ENCODE measurements at regions of chr5 and their contacts with region 1.

Region 1: GRCh38 chr5:145681686-145682085 is 153.5 kb downstream of the PRELID2 start:
- DNase-seq: peak in 2 of 5 donors; percentile 12 to 65
- H3K4me3 ChIP-seq: no peak overlapping the region
- H3K27ac ChIP-seq: no peak overlapping the region
- H3K4me1 ChIP-seq: peaks cover 3% of the 10 kb centered on the region
- H3K27me3 ChIP-seq: no peaks in the 10 kb centered on the region
- CTCF ChIP-seq: peak in 1 of 3 donors; percentile 51
- EP300 ChIP-seq: no peak
- POLR2A ChIP-seq: no peak

Region 2: GRCh38 chr5:145283101-145283810 is 398.4 kb before region 1 on chr5:
- intact Hi-C with region 1: no loop called
- DNase-seq: no peak
- H3K4me3 ChIP-seq: no peak overlapping the region
- H3K27ac ChIP-seq: no peak overlapping the region
- H3K4me1 ChIP-seq: no peaks in the 10 kb centered on the region
- H3K27me3 ChIP-seq: no peaks in the 10 kb centered on the region
- CTCF ChIP-seq: no peak
- EP300 ChIP-seq: no peak
- POLR2A ChIP-seq: no peak

Region 3: GRCh38 chr5:145408048-145408341 is 273.7 kb before region 1 on chr5:
- intact Hi-C with region 1: no loop called
- DNase-seq: no peak
- H3K4me3 ChIP-seq: no peak overlapping the region
- H3K27ac ChIP-seq: no peak overlapping the region
- H3K4me1 ChIP-seq: no peaks in the 10 kb centered on the region
- H3K27me3 ChIP-seq: no peaks in the 10 kb centered on the region
- CTCF ChIP-seq: no peak
- EP300 ChIP-seq: no peak
- POLR2A ChIP-seq: no peak

Region 4: GRCh38 chr5:145811834-145812625 is 130.3 kb after region 1 on chr5:
- intact Hi-C with region 1: loop called in 2 of 4 experiments (anchors 10 kb)
- DNase-seq: no peak
- H3K4me3 ChIP-seq: no peak overlapping the region
- H3K27ac ChIP-seq: no peak overlapping the region
- H3K4me1 ChIP-seq: no peaks in the 10 kb centered on the region
- H3K27me3 ChIP-seq: no peaks in the 10 kb centered on the region
- CTCF ChIP-seq: no peak
- EP300 ChIP-seq: no peak
- POLR2A ChIP-seq: no peak

Region 5: GRCh38 chr5:147113967-147114366 is 1432.3 kb after region 1 on chr5:
- intact Hi-C with region 1: no loop called
- DNase-seq: no peak
- H3K4me3 ChIP-seq: no peak overlapping the region
- H3K27ac ChIP-seq: no peak overlapping the region
- H3K4me1 ChIP-seq: no peaks in the 10 kb centered on the region
- H3K27me3 ChIP-seq: no peaks in the 10 kb centered on the region
- CTCF ChIP-seq: no peak
- EP300 ChIP-seq: no peak
- POLR2A ChIP-seq: no peak